Endothelial cell of umbilical vein (primary cell): ENCODE measurements at regions of chr7 and their contacts with region 1.

Region 1: DNA sequence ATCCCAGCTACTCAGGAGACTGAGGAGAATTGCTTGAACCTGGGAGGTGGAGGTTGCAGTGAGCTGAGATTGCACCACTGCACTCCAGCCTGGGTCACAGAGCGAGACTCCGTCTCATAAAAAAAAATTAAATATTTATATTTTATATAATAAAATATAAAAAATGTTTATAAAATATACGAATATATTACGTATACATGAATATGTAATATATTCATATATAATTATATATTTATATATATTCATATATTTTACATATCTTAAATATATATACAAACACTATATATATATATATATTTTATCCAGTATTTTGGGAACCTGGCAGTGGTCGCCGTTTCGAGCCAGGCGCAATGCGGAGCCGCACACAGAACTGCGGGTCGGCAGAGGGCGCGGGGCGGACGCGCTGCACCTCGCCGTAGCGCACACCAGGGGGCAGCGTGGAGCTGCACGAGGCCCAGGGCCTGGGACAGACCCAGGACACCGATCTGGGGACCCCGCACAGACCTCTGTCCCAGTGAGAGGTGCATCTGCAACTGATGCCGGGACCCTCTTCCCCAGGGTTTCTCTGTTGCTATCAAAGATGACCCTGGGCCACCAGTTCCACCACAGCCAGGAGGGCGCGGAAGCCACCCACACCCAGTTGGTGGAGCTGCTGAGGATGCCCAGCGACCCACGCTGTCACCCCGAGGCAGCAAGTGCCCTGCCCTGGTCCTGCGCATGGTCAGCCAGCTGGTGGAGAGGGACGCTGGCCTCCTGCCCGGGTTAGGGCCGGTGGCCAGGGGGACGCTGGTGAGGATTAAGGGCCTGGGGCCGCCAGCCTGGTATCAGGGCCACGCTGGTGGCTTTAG is 22.7 kb downstream of the AP5Z1 start:
- DNase-seq: peak; percentile 30
- H3K4me3 ChIP-seq: no peak overlapping the region
- H3K27ac ChIP-seq: no peak overlapping the region
- H3K4me1 ChIP-seq: no peaks in the 10 kb centered on the region
- H3K27me3 ChIP-seq: no peaks in the 10 kb centered on the region
- CTCF ChIP-seq: peak; percentile 67 to 97
- POLR2A ChIP-seq: no peak

Region 2: GRCh38 chr7:4883374-4884144 is 85.5 kb after region 1 on chr7 and contains the start of gene RADIL:
- CTCF ChIA-PET with region 1: interaction called, 22 read pairs
- POLR2A ChIA-PET with region 1: no interaction called
- dilution Hi-C with region 1: no loop called
- intact Hi-C with region 1: loop called (anchors 1 kb)
- DNase-seq: peak; percentile 89
- H3K4me3 ChIP-seq: peak within 1 kb of the TSS; percentile 3 to 46 (median 9)
- H3K27ac ChIP-seq: no peak within 1 kb of the TSS
- H3K4me1 ChIP-seq: peaks cover 8% of the 10 kb centered on the region
- H3K27me3 ChIP-seq: no peaks in the 10 kb centered on the region
- CTCF ChIP-seq: peak; percentile 80 to 92
- POLR2A ChIP-seq: no peak
- total RNA-seq, gene RADIL: 1.0 and 2.5 TPM in 2 replicates

Region 3: GRCh38 chr7:4973728-4974198 is 175.7 kb after region 1 on chr7:
- CTCF ChIA-PET with region 1: interaction called, 11 read pairs
- POLR2A ChIA-PET with region 1: no interaction called
- dilution Hi-C with region 1: no loop called
- intact Hi-C with region 1: loop called (anchors 1 kb)
- DNase-seq: peak; percentile 90
- H3K4me3 ChIP-seq: peak overlapping the region; percentile 47 to 58 (median 57)
- H3K27ac ChIP-seq: no peak overlapping the region
- H3K4me1 ChIP-seq: peaks cover 7% of the 10 kb centered on the region
- H3K27me3 ChIP-seq: no peaks in the 10 kb centered on the region
- CTCF ChIP-seq: peak; percentile 87 to 93
- POLR2A ChIP-seq: peak; percentile 73

Region 4: GRCh38 chr7:5083311-5083711 is 285.2 kb after region 1 on chr7:
- CTCF ChIA-PET with region 1: interaction called, 104 read pairs
- POLR2A ChIA-PET with region 1: no interaction called
- dilution Hi-C with region 1: no loop called
- intact Hi-C with region 1: loop called (anchors 1 kb)
- DNase-seq: no peak
- H3K4me3 ChIP-seq: no peak overlapping the region
- H3K27ac ChIP-seq: no peak overlapping the region
- H3K4me1 ChIP-seq: no peaks in the 10 kb centered on the region
- H3K27me3 ChIP-seq: no peaks in the 10 kb centered on the region
- CTCF ChIP-seq: no peak
- POLR2A ChIP-seq: no peak

Region 5: DNA sequence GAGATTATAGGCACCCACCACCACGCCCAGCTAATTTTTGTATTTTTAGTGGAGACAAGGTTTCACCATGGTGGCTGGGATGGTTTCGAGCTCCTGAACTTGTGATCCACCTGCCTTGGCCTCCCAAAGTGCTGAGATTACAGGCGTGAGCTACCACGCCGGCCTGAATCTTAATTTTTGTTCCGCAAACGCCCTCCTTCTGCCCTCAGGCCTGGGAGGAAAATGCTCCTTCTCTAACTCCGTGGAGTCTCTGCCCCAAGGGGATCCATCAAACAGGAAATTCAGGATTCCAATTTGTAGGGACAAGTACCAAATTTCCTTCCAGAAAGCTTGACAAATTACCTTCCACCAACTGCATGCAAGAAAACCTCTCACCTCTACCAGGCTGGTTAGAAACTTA is 290.8 kb after region 1 on chr7:
- CTCF ChIA-PET with region 1: interaction called, 104 read pairs
- POLR2A ChIA-PET with region 1: no interaction called
- dilution Hi-C with region 1: no loop called
- intact Hi-C with region 1: loop called (anchors 1 kb)
- DNase-seq: no peak
- H3K4me3 ChIP-seq: no peak overlapping the region
- H3K27ac ChIP-seq: no peak overlapping the region
- H3K4me1 ChIP-seq: no peaks in the 10 kb centered on the region
- H3K27me3 ChIP-seq: no peaks in the 10 kb centered on the region
- CTCF ChIP-seq: no peak
- POLR2A ChIP-seq: no peak

Region 6: DNA sequence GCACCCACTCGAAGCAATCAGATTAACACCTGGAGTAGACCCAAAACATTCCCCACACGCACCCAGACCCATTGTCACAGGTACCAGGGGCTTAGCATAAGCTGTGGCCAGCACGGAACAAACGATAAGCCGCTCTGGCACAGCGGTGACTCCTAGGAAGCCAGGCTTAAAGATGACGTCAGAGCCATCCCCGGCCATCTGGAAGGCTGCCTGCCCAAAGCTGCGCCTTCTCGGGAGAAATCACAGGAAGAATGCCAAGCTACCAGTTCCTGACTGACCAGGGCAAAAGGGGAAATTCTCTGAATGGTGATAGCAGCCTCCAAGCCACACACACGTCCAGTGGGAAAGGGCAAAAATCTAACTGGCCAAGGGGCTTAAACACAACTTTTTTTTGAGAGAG is 379.0 kb after region 1 on chr7:
- CTCF ChIA-PET with region 1: interaction called, 13 read pairs
- POLR2A ChIA-PET with region 1: no interaction called
- dilution Hi-C with region 1: no loop called
- intact Hi-C with region 1: no loop called
- DNase-seq: peak; percentile 42
- H3K4me3 ChIP-seq: no peak overlapping the region
- H3K27ac ChIP-seq: no peak overlapping the region
- H3K4me1 ChIP-seq: no peaks in the 10 kb centered on the region
- H3K27me3 ChIP-seq: no peaks in the 10 kb centered on the region
- CTCF ChIP-seq: no peak
- POLR2A ChIP-seq: no peak